ENCODE measurements at regions of chr6 and their contacts with region 1.

Region 1: GRCh38 chr6:129575378-129576118 is 134.4 kb downstream of the ARHGAP18 start:
- DNase-seq: no peak
- ATAC-seq: no peak
- H3K4me3 Mint-ChIP-seq: no peak overlapping the region
- H3K27ac Mint-ChIP-seq: no peak overlapping the region
- H3K4me1 Mint-ChIP-seq: peaks cover 8% of the 10 kb centered on the region
- H3K27me3 Mint-ChIP-seq: no peaks in the 10 kb centered on the region

Region 2: GRCh38 chr6:128725271-128726233 is 850.0 kb before region 1 on chr6:
- CTCF ChIA-PET with region 1: no interaction called
- POLR2A ChIA-PET with region 1: no interaction called
- intact Hi-C with region 1: loop called (anchors 10 kb)
- DNase-seq: peak; percentile 40
- ATAC-seq: no peak
- H3K4me3 Mint-ChIP-seq: no peak overlapping the region
- H3K27ac Mint-ChIP-seq: no peak overlapping the region
- H3K4me1 Mint-ChIP-seq: no peaks in the 10 kb centered on the region
- H3K27me3 Mint-ChIP-seq: peaks cover 30% of the 10 kb centered on the region

Region 3: DNA sequence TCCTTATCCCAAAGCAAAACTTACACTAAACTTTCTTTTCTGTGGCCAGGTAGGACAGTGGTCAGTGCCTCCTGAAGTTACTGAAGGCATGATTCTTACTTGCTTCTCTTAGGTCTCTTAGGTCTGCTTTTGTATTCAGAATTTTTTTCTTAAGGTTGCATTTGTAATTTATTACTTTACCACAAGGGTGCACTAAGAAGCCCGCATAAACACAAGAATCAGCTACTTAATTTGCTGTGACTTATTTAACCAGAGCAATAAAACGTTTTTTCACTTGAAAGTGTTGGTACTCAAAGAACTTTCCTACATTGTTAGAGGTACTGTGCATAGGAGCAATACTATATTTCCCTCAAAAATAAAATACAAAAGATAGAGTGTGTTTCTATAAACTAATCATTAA is 768.0 kb before region 1 on chr6:
- CTCF ChIA-PET with region 1: interaction called, 3 read pairs
- POLR2A ChIA-PET with region 1: no interaction called
- intact Hi-C with region 1: loop called in 1 of 2 experiments (anchors 10 kb)
- DNase-seq: no peak
- ATAC-seq: no peak
- H3K4me3 Mint-ChIP-seq: no peak overlapping the region
- H3K27ac Mint-ChIP-seq: no peak overlapping the region
- H3K4me1 Mint-ChIP-seq: no peaks in the 10 kb centered on the region
- H3K27me3 Mint-ChIP-seq: peaks cover 8% of the 10 kb centered on the region

Region 4: DNA sequence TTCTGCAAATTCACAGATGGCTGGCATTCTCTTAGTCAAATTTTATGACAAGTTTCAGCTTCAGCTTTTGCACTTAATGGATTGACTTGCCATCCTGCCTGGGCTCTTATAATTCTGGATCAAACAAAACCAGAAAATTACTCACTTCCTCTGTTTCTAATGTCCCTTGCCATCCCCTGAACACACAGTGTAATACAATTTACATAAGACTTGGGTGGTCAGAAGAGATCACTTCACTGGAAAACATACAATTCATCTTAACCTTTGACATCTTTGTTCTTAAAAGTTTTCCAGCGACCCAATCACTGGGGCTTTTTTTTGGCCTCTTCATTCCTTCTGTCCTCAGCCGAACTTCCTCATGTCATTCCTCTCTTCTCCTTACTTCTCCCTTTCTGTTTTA is 64.6 kb before region 1 on chr6:
- CTCF ChIA-PET with region 1: no interaction called
- POLR2A ChIA-PET with region 1: no interaction called
- intact Hi-C with region 1: no loop called
- DNase-seq: no peak
- ATAC-seq: no peak
- H3K4me3 Mint-ChIP-seq: no peak overlapping the region
- H3K27ac Mint-ChIP-seq: no peak overlapping the region
- H3K4me1 Mint-ChIP-seq: peaks cover 2% of the 10 kb centered on the region
- H3K27me3 Mint-ChIP-seq: no peaks in the 10 kb centered on the region

Measured in activated CD4-positive, alpha-beta T cell treated with anti-CD3 and anti-CD28 coated beads for 36 hours (primary cell).